Cardiac septum (tissue), 1 donor: ENCODE measurements at regions of chr12 and their contacts with region 1.

Region 1: GRCh38 chr12:98719515-98720504 is 74.7 kb downstream of the APAF1 start:
- DNase-seq: no peak

Region 2: GRCh38 chr12:98678259-98678945 is 41.4 kb before region 1 on chr12:
- intact Hi-C with region 1: no loop called
- DNase-seq: no peak

Region 3: DNA sequence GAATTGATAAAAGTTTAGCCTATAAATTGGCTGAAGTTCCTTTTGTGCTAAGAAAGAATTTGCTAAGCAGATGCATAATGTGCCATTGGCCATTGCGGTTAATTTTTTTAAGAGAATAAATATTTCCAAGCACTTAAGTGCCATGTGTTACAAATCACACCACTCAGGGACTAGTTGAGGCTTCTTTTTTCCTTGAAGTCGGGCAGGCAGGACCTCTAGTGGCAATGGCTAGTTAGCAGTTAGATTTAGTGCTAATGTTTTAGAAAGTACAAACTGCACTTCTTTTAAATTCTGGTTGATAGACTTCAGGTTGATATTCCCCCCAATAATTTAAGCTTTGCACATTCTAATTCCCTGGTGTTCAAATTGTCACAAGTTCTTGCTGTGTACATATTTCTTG is 219.5 kb after region 1 on chr12:
- intact Hi-C with region 1: loop called (anchors 10 kb)
- DNase-seq: no peak